Gastrocnemius medialis (tissue), 4 donors: ENCODE measurements at regions of chr15 and their contacts with region 1.

Region 1: DNA sequence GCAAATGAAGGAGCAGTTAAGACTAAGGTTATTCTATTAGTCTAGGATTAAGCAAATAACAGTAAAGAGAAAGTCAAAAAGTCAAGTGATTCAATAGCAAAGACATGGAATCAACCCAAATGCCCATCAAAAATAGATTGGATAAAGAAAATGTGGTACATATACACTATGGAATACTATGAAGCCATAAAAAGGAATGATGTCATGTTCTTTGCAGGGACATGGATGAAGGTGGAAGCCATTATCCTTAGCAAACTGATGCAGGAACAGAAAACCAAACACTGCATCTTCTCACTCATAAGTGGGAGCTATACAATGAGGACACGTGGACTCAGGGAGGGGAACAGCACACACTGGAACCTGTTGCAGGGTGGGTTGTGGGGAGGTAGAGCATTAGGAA is 29.0 kb downstream of the UNC13C start:
- DNase-seq: no peak
- ATAC-seq: no peak
- H3K4me3 ChIP-seq: no peak overlapping the region
- H3K27ac ChIP-seq: no peak overlapping the region
- H3K4me1 ChIP-seq: no peaks in the 10 kb centered on the region
- H3K27me3 ChIP-seq: no peaks in the 10 kb centered on the region
- CTCF ChIP-seq: no peak
- POLR2A ChIP-seq: no peak

Region 2: DNA sequence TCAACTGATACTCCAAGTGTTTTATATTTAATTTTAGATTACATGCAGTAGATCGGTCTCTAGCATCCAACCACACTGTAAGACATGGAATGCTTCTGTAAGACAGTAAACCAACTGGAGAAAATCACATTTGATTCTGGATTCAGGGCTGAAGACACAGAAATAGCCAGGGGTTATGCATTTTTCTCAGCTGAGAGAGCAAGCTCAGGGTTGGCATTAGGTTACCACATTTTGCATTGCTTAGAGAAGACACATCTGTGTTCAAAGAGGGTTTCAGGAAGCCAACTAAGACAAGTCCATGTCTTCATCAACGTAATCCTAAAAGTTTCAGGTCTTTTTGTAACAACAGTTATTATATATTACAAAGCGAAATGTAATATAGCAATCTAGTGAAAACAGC is 56.7 kb before region 1 on chr15:
- in situ Hi-C with region 1: loop called in 1 of 4 experiments (anchors 10 kb)
- intact Hi-C with region 1: no loop called
- DNase-seq: no peak
- ATAC-seq: no peak
- H3K4me3 ChIP-seq: no peak overlapping the region
- H3K27ac ChIP-seq: no peak overlapping the region
- H3K4me1 ChIP-seq: no peaks in the 10 kb centered on the region
- H3K27me3 ChIP-seq: no peaks in the 10 kb centered on the region
- CTCF ChIP-seq: no peak
- POLR2A ChIP-seq: no peak

Region 3: DNA sequence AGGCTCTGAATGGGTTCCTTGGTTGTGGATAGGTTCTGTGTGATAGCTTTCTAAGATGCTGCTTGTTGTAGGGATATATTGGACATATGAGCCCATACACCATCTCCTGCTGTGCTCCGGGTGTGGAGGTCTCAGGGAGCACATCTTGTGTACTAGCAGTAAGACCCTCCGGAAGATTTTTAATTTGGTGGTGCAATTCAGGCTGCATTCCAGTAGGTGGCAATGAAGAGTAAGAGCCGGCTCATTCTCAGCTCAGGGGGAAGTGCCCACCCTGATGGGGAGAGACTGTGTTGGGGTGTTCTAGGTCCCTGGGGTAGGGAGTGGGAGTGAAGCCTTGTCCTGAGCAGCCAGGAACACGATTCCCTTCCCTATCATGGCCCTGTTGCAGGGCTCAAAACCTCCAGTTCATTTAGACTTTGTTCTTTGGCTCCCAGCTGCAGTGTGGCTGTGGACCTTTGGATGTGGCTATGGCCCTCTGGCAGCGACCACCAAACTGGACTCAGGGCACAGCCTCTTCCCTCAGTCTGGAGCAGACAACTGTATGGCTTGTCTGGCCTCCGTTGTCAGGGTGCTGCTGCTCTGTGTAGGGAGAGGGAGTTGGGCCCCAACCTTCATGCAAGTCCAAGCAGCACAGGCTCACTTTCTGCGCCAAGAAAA is 75.7 kb after region 1 on chr15:
- in situ Hi-C with region 1: no loop called
- intact Hi-C with region 1: no loop called
- DNase-seq: no peak
- ATAC-seq: no peak
- H3K4me3 ChIP-seq: no peak overlapping the region
- H3K27ac ChIP-seq: no peak overlapping the region
- H3K4me1 ChIP-seq: no peaks in the 10 kb centered on the region
- H3K27me3 ChIP-seq: no peaks in the 10 kb centered on the region
- CTCF ChIP-seq: peak in 3 of 5 experiments; percentile 36 to 43 (median 41)
- POLR2A ChIP-seq: no peak

Region 4: DNA sequence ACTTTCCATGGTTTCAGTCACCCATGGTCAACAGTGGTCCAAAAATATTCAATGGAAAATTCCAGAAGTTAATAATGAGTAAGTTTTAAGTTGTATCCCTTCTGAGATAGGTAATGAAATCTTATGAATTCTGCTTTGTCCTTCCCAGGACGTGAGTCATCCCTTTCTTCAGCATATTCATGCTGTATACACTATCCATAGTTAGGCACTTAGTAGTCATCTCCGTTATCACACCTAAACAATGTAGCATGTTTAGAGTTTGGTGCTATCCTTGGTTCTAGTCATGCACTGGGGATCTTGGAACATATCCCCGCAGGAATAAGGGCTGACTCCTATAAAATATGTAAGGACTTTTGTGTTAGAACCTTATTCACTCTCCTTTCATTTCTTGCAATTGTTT is 124.2 kb after region 1 on chr15:
- in situ Hi-C with region 1: no loop called
- intact Hi-C with region 1: no loop called
- DNase-seq: no peak
- ATAC-seq: no peak
- H3K4me3 ChIP-seq: no peak overlapping the region
- H3K27ac ChIP-seq: no peak overlapping the region
- H3K4me1 ChIP-seq: no peaks in the 10 kb centered on the region
- H3K27me3 ChIP-seq: no peaks in the 10 kb centered on the region
- CTCF ChIP-seq: no peak
- POLR2A ChIP-seq: no peak

Region 5: GRCh38 chr15:54321426-54321825 is 314.2 kb after region 1 on chr15:
- in situ Hi-C with region 1: no loop called
- intact Hi-C with region 1: no loop called
- DNase-seq: no peak
- ATAC-seq: no peak
- H3K4me3 ChIP-seq: no peak overlapping the region
- H3K27ac ChIP-seq: no peak overlapping the region
- H3K4me1 ChIP-seq: no peaks in the 10 kb centered on the region
- H3K27me3 ChIP-seq: no peaks in the 10 kb centered on the region
- CTCF ChIP-seq: no peak
- POLR2A ChIP-seq: no peak